B cell (primary cell): ENCODE measurements at regions of chr14 and their contacts with region 1.

Region 1: GRCh38 chr14:56082880-56083279 is 35.3 kb upstream of the PELI2 start:
- DNase-seq: no peak
- ATAC-seq: no peak
- H3K4me3 ChIP-seq: no peak overlapping the region
- H3K4me3 Mint-ChIP-seq: no peak overlapping the region
- H3K27ac ChIP-seq: no peak overlapping the region
- H3K27ac Mint-ChIP-seq: no peak overlapping the region
- H3K4me1 ChIP-seq: no peaks in the 10 kb centered on the region
- H3K4me1 Mint-ChIP-seq: no peaks in the 10 kb centered on the region
- H3K27me3 ChIP-seq: peaks cover 0 to 5% (median 1%) of the 10 kb centered on the region in 4 experiments
- H3K27me3 Mint-ChIP-seq: peaks cover 33% of the 10 kb centered on the region
- CTCF ChIP-seq: no peak

Region 2: GRCh38 chr14:56094076-56094475 is 11.2 kb after region 1 on chr14:
- CTCF ChIA-PET with region 1: no interaction called
- POLR2A ChIA-PET with region 1: no interaction called
- intact Hi-C with region 1: no loop called
- DNase-seq: no peak
- ATAC-seq: no peak
- H3K4me3 ChIP-seq: no peak overlapping the region
- H3K4me3 Mint-ChIP-seq: no peak overlapping the region
- H3K27ac ChIP-seq: no peak overlapping the region
- H3K27ac Mint-ChIP-seq: no peak overlapping the region
- H3K4me1 ChIP-seq: no peaks in the 10 kb centered on the region
- H3K4me1 Mint-ChIP-seq: no peaks in the 10 kb centered on the region
- H3K27me3 ChIP-seq: peaks cover 0 to 4% (median 0%) of the 10 kb centered on the region in 4 experiments
- H3K27me3 Mint-ChIP-seq: peaks cover 31% of the 10 kb centered on the region
- CTCF ChIP-seq: no peak

Region 3: GRCh38 chr14:56195704-56196103 is 112.8 kb after region 1 on chr14:
- CTCF ChIA-PET with region 1: no interaction called
- POLR2A ChIA-PET with region 1: interaction called, 11 read pairs
- intact Hi-C with region 1: no loop called
- DNase-seq: peak; percentile 32
- ATAC-seq: peak; percentile 81
- H3K4me3 ChIP-seq: peak overlapping the region in 1 of 5 experiments; percentile 7
- H3K4me3 Mint-ChIP-seq: peak overlapping the region; percentile 28
- H3K27ac ChIP-seq: peak overlapping the region in 1 of 2 donors; percentile 11
- H3K27ac Mint-ChIP-seq: peak overlapping the region; percentile 12
- H3K4me1 ChIP-seq: peaks cover 25% of the 10 kb centered on the region in 2 donors
- H3K4me1 Mint-ChIP-seq: peaks cover 26% of the 10 kb centered on the region
- H3K27me3 ChIP-seq: no peaks in the 10 kb centered on the region
- H3K27me3 Mint-ChIP-seq: no peaks in the 10 kb centered on the region
- CTCF ChIP-seq: no peak